Mammary epithelial cell (primary cell): ENCODE measurements at regions of chr13 and their contacts with region 1.

Region 1: GRCh38 chr13:51814825-51815650 is 11.1 kb upstream of the DHRS12 start:
- DNase-seq: peak; percentile 67
- H3K4me3 ChIP-seq: peak overlapping the region in 2 of 3 experiments; percentile 22 to 34
- H3K27ac ChIP-seq: no peak overlapping the region
- H3K4me1 ChIP-seq: peaks cover 4% of the 10 kb centered on the region
- H3K27me3 ChIP-seq: no peaks in the 10 kb centered on the region
- CTCF ChIP-seq: peak; percentile 85 to 86

Region 2: GRCh38 chr13:51542346-51543242 is 272.4 kb before region 1 on chr13:
- CTCF ChIA-PET with region 1: no interaction called
- dilution Hi-C with region 1: no loop called
- in situ Hi-C with region 1: no loop called
- intact Hi-C with region 1: no loop called
- DNase-seq: no peak
- H3K4me3 ChIP-seq: no peak overlapping the region
- H3K27ac ChIP-seq: no peak overlapping the region
- H3K4me1 ChIP-seq: no peaks in the 10 kb centered on the region
- H3K27me3 ChIP-seq: no peaks in the 10 kb centered on the region
- CTCF ChIP-seq: no peak

Region 3: DNA sequence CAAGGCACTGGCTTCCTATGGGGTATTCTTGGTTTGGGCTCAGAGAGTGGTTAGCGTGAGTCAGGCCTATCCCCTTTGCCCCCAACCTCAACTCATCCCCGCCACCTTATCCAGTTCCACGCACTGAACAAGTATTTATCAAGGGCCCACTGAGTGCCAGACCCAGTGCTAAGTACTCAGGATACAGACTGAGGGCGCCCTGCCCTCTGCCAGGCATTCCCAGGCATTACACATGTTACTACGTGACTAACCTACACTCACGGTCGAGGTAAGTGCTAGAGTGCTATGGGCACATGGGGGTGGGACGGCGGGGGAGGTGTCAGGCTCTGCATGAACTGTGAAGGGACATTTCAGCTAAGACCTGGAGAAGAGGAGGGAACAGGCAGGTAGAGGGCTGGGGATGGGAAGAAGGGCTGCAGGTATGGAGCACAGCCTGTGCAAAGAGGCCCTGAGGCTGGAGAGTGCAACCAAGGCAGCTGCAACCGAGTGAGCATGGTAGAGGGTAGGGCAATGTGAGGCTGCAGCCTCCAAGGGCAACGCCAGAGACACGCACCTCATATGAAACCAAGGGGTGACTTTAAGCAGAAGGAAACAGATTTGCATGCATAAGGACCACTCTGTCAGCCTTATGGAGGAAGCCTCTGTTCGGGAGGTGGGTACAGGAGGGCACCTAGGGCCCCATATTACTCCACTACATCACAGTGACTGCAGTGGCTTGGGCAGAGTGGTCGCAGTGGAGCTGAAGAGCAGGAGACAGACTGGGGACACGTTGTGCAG is 33.6 kb before region 1 on chr13:
- CTCF ChIA-PET with region 1: no interaction called
- dilution Hi-C with region 1: no loop called
- in situ Hi-C with region 1: no loop called
- intact Hi-C with region 1: no loop called
- DNase-seq: peak; percentile 31
- H3K4me3 ChIP-seq: no peak overlapping the region
- H3K27ac ChIP-seq: no peak overlapping the region
- H3K4me1 ChIP-seq: no peaks in the 10 kb centered on the region
- H3K27me3 ChIP-seq: no peaks in the 10 kb centered on the region
- CTCF ChIP-seq: peak; percentile 51 to 69

Region 4: DNA sequence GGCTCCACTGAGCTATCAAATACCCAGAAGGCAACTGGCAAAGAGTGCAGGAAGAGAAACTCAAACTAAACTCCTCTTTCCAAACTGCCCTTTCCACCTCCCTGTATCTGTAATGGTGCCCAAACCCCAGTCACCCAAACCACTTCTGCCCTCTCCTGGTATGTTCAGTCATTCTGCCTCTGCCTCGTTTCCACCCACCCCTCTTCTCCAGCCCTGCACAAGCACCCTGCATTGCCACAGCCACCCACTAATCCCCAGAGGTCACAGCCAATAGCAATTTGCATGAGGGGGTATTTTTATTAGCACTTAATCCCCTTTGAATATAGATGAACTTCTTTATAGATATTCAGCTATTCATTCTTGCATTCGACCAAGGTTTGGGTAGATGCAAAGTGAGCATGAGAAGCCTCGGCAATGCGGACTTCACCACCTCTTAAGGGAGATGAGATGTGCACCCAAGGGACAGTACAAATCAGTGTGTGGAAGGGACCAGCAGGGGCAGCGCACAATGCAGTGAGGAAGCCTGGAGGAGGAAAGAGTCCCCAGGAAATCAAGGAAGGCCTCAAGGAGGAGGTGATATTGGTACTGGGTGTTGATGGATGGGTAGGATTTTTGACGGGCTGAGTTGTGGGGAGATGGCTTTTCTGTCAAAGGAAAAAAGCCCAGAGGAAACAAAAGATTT is 17.6 kb after region 1 on chr13:
- CTCF ChIA-PET with region 1: no interaction called
- dilution Hi-C with region 1: no loop called
- in situ Hi-C with region 1: no loop called
- intact Hi-C with region 1: loop called (anchors 1 kb)
- DNase-seq: no peak
- H3K4me3 ChIP-seq: no peak overlapping the region
- H3K27ac ChIP-seq: no peak overlapping the region
- H3K4me1 ChIP-seq: no peaks in the 10 kb centered on the region
- H3K27me3 ChIP-seq: no peaks in the 10 kb centered on the region
- CTCF ChIP-seq: peak; percentile 6 to 50